PC-3 (cell line): ENCODE measurements at regions of chr12 and their contacts with region 1.

Region 1: GRCh38 chr12:71754461-71755145 is at the start of gene RAB21:
- DNase-seq: peak; percentile 98
- ATAC-seq: peak; percentile 95
- H3K4me3 ChIP-seq: peak within 1 kb of the TSS; percentile 92
- H3K27ac ChIP-seq: peak within 1 kb of the TSS; percentile 62
- H3K4me1 ChIP-seq: peaks cover 11% of the 10 kb centered on the region; the same call in 1 of the 2 replicates
- H3K27me3 ChIP-seq: 0 out of 2 replicates have a peak, but pooled peaks cover 3% of the 10 kb centered on the region
- CTCF ChIP-seq: 0 out of 2 replicates have a peak, but pooled peaks have one; percentile 10
- total RNA-seq, gene RAB21: 27.3 and 28.9 TPM in 2 replicates

Region 2: DNA sequence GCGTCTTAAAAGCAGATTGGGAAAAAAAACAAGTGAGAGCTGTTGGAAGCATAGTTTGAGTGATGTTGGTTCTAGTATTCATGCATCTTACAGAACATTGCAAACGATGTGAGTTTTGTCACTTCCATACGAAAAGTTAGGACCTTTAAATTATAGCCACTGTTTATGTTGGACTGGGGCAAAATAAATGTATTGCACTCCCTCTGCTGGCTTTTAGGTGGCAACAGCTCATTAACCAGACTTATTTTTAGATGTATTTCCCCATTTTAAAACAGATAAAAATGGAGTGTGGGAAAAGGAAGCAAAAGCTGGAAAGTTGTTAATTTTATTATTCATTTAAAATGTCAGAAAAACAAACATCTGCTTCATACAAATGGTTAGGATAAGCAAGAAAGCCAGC is 203.1 kb before region 1 on chr12:
- CTCF ChIA-PET with region 1: no interaction called
- POLR2A ChIA-PET with region 1: no interaction called
- intact Hi-C with region 1: no loop called
- DNase-seq: peak; percentile 44
- ATAC-seq: peak; percentile 45
- H3K4me3 ChIP-seq: no peak overlapping the region
- H3K27ac ChIP-seq: no peak overlapping the region
- H3K4me1 ChIP-seq: no peaks in the 10 kb centered on the region
- H3K27me3 ChIP-seq: no peaks in the 10 kb centered on the region
- CTCF ChIP-seq: peak; percentile 74

Region 3: DNA sequence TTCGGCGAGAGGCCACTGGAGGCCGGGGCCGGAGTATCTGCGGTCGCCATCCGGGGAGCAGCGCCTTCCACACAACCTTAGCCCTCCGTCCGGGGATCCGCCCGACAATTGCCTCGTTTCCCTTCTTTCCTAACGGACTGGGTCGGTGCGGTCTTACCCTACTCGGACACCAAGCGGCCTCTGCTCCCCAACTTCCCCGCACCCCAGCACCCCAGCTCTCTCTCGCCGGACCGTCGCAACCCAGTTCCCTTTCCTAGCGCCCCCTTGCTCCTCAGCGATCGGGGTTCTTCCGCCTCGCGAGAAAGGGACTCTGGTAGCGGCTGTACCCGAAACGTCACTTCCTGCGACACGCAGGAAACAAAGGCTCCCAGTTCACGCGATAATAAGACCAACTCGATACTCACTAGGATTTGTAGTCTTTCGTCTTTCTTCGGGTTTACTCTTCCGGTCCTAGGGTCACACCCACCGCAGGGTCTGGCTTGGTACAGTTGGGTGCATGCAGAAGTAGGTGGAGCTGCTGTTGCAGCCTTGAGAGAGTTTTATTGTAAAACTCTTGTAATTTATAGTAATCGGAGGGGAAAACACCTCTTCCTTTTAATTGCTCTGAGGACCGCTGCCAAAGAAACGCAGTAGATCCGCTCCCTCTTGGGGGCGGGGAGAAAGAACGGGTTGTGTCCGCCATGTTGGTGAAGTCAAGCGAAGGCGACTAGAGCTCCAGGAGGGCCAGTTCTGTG is 90.9 kb before region 1 on chr12 and contains the start of gene ZFC3H1:
- CTCF ChIA-PET with region 1: no interaction called
- POLR2A ChIA-PET with region 1: interaction called, 10 read pairs
- intact Hi-C with region 1: loop called (anchors 2 kb)
- DNase-seq: peak; percentile 99
- ATAC-seq: peak; percentile 87
- H3K4me3 ChIP-seq: peak within 1 kb of the TSS; percentile 95
- H3K27ac ChIP-seq: peak within 1 kb of the TSS; percentile 87
- H3K4me1 ChIP-seq: peaks cover 18% of the 10 kb centered on the region
- H3K27me3 ChIP-seq: no peaks in the 10 kb centered on the region
- CTCF ChIP-seq: peak; percentile 48
- total RNA-seq, gene ZFC3H1: 13.7 and 18.5 TPM in 2 replicates